MCF 10A (cell line): ENCODE measurements at regions of chr9 and their contacts with region 1.

Region 1: GRCh38 chr9:134738869-134739659 is 97.5 kb downstream of the COL5A1 start:
- DNase-seq: peak; percentile 62
- H3K4me3 Mint-ChIP-seq: no peak overlapping the region
- H3K27ac Mint-ChIP-seq: no peak overlapping the region
- H3K4me1 Mint-ChIP-seq: no peaks in the 10 kb centered on the region
- H3K27me3 Mint-ChIP-seq: peaks cover 73% of the 10 kb centered on the region
- CTCF ChIP-seq: peak; percentile 88

Region 2: GRCh38 chr9:134449221-134449894 is 289.7 kb before region 1 on chr9:
- CTCF ChIA-PET with region 1: interaction called, 8 read pairs
- POLR2A ChIA-PET with region 1: no interaction called
- intact Hi-C with region 1: loop called (anchors 1 kb)
- DNase-seq: peak; percentile 91
- H3K4me3 Mint-ChIP-seq: no peak overlapping the region
- H3K27ac Mint-ChIP-seq: no peak overlapping the region
- H3K4me1 Mint-ChIP-seq: peaks cover 13% of the 10 kb centered on the region
- H3K27me3 Mint-ChIP-seq: no peaks in the 10 kb centered on the region
- CTCF ChIP-seq: peak; percentile 82

Region 3: GRCh38 chr9:134689321-134690181 is 49.5 kb before region 1 on chr9:
- CTCF ChIA-PET with region 1: interaction called, 17 read pairs
- POLR2A ChIA-PET with region 1: no interaction called
- intact Hi-C with region 1: no loop called
- DNase-seq: peak; percentile 48
- H3K4me3 Mint-ChIP-seq: no peak overlapping the region
- H3K27ac Mint-ChIP-seq: no peak overlapping the region
- H3K4me1 Mint-ChIP-seq: no peaks in the 10 kb centered on the region
- H3K27me3 Mint-ChIP-seq: peaks cover 19% of the 10 kb centered on the region
- CTCF ChIP-seq: peak; percentile 76

Region 4: DNA sequence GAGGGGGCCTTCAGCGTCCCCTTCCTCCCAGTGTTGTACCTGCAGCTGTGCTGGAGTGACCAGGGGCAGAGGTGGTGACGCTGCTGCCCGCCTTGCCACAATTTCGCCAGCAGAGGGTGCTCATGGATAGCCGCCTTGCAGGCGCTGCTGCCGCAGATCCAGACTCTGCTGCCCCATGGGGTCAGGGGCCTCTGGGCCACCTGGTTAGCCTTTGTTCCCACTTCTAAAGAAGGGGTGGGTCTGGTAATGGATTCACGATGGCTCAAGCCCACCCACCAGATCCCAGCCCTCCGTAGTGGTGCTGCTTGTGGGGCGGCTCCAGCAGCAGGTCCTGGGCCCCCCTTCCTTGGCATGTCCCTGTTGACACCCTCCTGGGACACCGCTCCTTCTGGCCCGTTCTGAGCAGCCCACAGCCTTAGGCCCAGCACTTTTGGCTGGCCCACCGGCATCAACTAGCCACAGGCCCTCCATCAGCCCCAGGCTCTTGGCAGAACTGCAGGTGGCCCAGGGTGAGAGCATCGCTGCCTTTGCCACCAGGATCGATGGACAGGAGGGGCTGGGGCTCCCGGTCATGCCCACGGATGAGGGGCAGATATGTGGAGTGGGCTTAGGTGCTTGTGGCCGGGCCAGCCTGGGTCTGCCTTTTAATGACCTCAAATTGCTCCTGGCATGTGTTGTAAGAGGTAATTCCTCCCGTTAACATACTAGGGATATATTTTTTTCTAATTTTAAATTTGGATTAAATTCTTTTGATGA is 40.3 kb before region 1 on chr9:
- CTCF ChIA-PET with region 1: interaction called, 32 read pairs
- POLR2A ChIA-PET with region 1: interaction called, 6 read pairs
- intact Hi-C with region 1: loop called (anchors 1 kb)
- DNase-seq: peak; percentile 57
- H3K4me3 Mint-ChIP-seq: no peak overlapping the region
- H3K27ac Mint-ChIP-seq: no peak overlapping the region
- H3K4me1 Mint-ChIP-seq: peaks cover 10% of the 10 kb centered on the region
- H3K27me3 Mint-ChIP-seq: peaks cover 5% of the 10 kb centered on the region
- CTCF ChIP-seq: peak; percentile 97

Region 5: DNA sequence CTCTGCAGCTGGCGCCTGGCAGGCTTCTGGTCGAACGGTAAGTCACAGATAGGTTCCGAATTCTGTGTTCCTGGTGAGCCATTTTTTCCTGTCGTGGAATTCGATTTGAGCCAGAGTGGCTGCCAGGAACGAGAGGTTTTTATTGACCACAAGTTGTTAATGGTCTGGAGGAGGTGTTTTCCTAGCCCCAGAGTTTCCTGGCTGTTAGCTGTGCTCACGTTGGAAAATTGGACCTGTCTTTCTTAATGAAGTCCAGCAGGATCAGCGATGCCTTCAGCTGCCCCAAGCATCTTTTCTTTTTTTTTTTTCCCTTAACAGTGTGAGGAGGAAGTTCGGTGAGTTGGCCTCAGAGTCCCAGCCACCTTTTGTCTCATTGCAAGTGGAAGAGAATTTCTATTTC is 34.6 kb before region 1 on chr9:
- CTCF ChIA-PET with region 1: interaction called, 22 read pairs
- POLR2A ChIA-PET with region 1: interaction called, 6 read pairs
- intact Hi-C with region 1: no loop called
- DNase-seq: no peak
- H3K4me3 Mint-ChIP-seq: no peak overlapping the region
- H3K27ac Mint-ChIP-seq: no peak overlapping the region
- H3K4me1 Mint-ChIP-seq: peaks cover 10% of the 10 kb centered on the region
- H3K27me3 Mint-ChIP-seq: peaks cover 26% of the 10 kb centered on the region
- CTCF ChIP-seq: no peak